ENCODE measurements at regions of chr1 and their contacts with region 1.

Region 1: DNA sequence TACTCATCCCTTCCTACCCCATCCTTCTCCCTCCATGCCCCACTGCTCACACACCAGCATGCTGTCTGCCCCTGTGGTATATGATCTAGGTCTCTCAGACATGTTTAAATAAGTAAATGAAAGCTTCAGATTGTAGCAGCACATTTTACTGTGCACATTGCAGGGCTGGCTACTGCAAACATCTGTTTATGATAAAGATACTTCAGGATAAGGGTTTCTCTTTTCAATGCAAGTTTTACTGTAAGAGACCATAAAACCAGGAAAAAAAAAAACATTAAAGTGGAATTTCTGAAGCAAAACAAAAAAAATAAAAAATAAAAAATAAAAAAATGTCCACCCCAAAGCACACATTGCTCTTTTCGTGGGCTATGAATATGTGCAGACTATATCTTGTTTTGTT is 184.4 kb downstream of the USH2A start:
- DNase-seq: no peak
- ATAC-seq: no peak
- H3K4me3 Mint-ChIP-seq: no peak overlapping the region
- H3K27ac Mint-ChIP-seq: no peak overlapping the region
- H3K4me1 Mint-ChIP-seq: no peaks in the 10 kb centered on the region
- H3K27me3 Mint-ChIP-seq: no peaks in the 10 kb centered on the region

Region 2: GRCh38 chr1:216261631-216262030 is 22.8 kb after region 1 on chr1:
- CTCF ChIA-PET with region 1: no interaction called
- POLR2A ChIA-PET with region 1: no interaction called
- intact Hi-C with region 1: loop called in 1 of 2 experiments (anchors 1 kb)
- DNase-seq: no peak
- ATAC-seq: no peak
- H3K4me3 Mint-ChIP-seq: no peak overlapping the region
- H3K27ac Mint-ChIP-seq: no peak overlapping the region
- H3K4me1 Mint-ChIP-seq: no peaks in the 10 kb centered on the region
- H3K27me3 Mint-ChIP-seq: no peaks in the 10 kb centered on the region